Lower leg skin (tissue), 4 donors: ENCODE measurements at regions of chr9 and their contacts with region 1.

Region 1: DNA sequence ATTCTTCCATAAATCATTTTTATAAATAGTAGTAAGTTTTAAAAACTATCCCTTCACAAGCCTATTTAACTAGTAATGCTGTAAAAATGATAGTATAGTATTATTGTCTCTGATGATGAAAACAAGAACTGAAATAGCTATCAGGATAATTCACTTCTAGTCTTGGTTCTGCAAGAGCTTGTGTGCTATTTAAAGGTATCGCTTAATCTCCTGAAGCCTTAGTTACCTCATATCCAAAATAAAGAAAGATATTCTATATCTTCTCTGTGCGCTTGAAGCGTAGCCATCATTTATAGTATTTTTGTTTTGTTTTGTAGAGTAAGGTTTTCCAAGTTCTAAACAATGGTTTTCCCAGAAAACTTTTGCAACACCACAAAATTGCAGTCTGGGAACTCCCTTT is 180.1 kb downstream of the TMC1 start:
- DNase-seq: no peak
- H3K4me3 ChIP-seq: no peak overlapping the region
- CTCF ChIP-seq: no peak
- POLR2A ChIP-seq: no peak

Region 2: DNA sequence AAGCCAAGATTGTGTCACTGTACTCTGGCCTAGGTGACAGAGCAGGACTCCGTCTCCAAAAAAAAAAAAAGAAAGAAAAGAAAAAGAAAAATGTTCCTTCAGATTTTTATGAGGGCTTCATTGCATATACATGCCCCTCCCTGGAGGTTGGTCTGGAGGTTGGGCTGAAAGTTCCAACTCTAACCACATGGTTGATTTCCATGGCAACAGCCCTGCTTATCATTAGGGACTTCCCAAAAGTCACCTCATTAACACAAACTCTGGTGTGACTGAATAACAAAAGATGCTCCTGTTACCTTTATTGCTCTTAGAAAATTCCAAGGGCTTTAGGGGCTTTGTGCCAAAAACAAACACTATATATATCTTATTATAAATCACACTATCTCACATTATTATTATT is 66.3 kb before region 1 on chr9:
- intact Hi-C with region 1: no loop called
- DNase-seq: no peak
- H3K4me3 ChIP-seq: no peak overlapping the region
- CTCF ChIP-seq: no peak
- POLR2A ChIP-seq: no peak

Region 3: GRCh38 chr9:72665421-72665820 is 36.1 kb before region 1 on chr9:
- intact Hi-C with region 1: loop called (anchors 2 kb)
- DNase-seq: no peak
- H3K4me3 ChIP-seq: no peak overlapping the region
- CTCF ChIP-seq: no peak
- POLR2A ChIP-seq: no peak